ENCODE measurements at regions of chr1 and their contacts with region 1.

Region 1: GRCh38 chr1:54944610-54945544 is 35.6 kb upstream of the TMEM61 start:
- DNase-seq: peak; percentile 63
- H3K4me3 ChIP-seq: no peak overlapping the region
- H3K27ac ChIP-seq: no peak overlapping the region
- H3K27me3 ChIP-seq: no peaks in the 10 kb centered on the region
- CTCF ChIP-seq: peak; percentile 87

Region 2: DNA sequence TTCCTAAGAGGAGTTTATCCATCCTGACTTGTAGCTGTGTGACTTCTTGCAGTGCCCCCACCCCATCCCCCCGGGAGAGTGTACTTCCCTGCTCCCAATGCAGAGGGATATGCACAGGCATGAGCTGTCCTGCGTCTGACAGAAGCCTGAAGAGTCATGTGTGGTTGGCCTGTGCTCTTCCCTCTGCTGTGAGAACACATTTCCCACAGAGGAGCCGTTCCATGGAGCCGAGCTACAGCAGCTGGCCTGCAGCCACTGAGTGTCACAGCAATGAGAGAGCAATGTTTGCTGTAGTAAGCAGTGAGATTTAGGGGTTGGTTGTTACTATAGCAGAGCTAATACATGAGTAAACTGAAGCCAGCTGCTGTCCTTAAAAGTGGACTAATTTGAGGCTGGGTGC is 202.6 kb before region 1 on chr1:
- CTCF ChIA-PET with region 1: no interaction called
- POLR2A ChIA-PET with region 1: no interaction called
- DNase-seq: no peak
- H3K4me3 ChIP-seq: no peak overlapping the region
- H3K27ac ChIP-seq: peak overlapping the region; percentile 21
- H3K27me3 ChIP-seq: no peaks in the 10 kb centered on the region
- CTCF ChIP-seq: no peak

Region 3: DNA sequence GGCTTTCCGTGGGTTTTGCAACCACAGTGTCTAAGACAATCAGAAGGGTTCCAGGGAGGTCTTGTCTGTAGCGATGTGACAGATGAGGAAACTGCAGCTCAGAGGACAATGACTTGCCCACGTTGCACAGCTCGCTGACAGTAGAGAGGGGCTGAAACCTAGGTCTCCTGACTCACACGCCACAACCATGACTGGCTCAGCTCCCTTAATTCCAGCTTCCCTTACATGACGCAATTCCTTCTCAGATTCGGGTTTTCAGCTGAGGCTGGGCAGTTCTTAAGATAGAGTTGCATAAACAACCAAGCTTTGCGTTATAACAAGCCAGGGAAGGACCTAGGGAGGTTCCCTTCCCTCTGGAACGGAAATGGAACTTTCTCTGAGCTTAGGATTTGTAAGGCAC is 94.1 kb before region 1 on chr1:
- CTCF ChIA-PET with region 1: interaction called, 13 read pairs
- POLR2A ChIA-PET with region 1: no interaction called
- DNase-seq: peak; percentile 94
- H3K4me3 ChIP-seq: no peak overlapping the region
- H3K27ac ChIP-seq: peak overlapping the region; percentile 95
- H3K27me3 ChIP-seq: no peaks in the 10 kb centered on the region
- CTCF ChIP-seq: no peak

Region 4: GRCh38 chr1:54886724-54887664 is 57.9 kb before region 1 on chr1 and contains the start of gene DHCR24:
- CTCF ChIA-PET with region 1: interaction called, 16 read pairs
- POLR2A ChIA-PET with region 1: interaction called, 15 read pairs
- DNase-seq: no peak
- H3K4me3 ChIP-seq: peak within 1 kb of the TSS; percentile 90
- H3K27ac ChIP-seq: no peak within 1 kb of the TSS
- H3K27me3 ChIP-seq: peaks cover 4% of the 10 kb centered on the region
- CTCF ChIP-seq: no peak
- polyA plus RNA-seq, gene DHCR24: 60.5 and 89.0 TPM in 2 replicates

Region 5: DNA sequence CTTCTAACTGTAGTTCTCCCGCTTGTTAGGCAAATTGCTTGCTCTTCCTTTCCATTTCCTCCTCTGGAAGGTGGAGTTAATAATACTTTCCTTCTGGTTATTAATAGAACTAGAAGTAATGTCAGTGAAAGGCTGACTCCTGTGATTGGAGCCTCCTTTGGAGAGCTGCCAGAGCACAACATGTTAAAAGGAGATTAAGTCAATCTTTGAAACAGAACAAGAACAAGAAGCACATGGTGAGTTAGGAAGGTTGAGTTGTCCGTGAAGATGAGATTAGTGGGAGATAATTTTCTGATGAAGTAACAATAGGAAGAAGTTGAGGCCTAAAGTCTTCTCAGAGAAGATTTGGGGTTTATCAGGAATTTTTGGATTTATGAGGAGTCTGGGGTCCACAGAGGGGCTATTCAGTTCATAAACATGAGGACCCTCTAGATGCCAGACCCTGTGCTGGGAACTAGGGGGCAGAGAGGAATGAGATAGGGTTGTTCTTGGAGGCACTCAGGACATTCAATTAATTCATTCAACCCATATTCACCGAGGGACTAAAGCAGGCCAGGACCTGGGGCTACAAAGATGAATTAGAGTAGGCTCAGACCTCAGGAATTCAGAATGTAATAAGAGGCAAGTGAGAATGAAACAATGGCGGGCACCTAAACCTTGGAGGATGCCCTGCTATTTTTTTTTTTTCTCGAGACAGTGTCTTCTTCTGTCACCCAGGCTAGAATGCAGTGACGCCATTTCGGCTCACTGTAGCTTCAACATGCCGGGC is 17.2 kb before region 1 on chr1:
- CTCF ChIA-PET with region 1: interaction called, 47 read pairs
- POLR2A ChIA-PET with region 1: no interaction called
- DNase-seq: no peak
- H3K4me3 ChIP-seq: no peak overlapping the region
- H3K27ac ChIP-seq: no peak overlapping the region
- H3K27me3 ChIP-seq: peaks cover 3% of the 10 kb centered on the region
- CTCF ChIP-seq: no peak

Region 6: GRCh38 chr1:54956726-54957125 is 11.8 kb after region 1 on chr1:
- CTCF ChIA-PET with region 1: interaction called, 19 read pairs
- POLR2A ChIA-PET with region 1: interaction called, 3 read pairs
- DNase-seq: no peak
- H3K4me3 ChIP-seq: no peak overlapping the region
- H3K27ac ChIP-seq: no peak overlapping the region
- H3K27me3 ChIP-seq: no peaks in the 10 kb centered on the region
- CTCF ChIP-seq: no peak

Region 7: DNA sequence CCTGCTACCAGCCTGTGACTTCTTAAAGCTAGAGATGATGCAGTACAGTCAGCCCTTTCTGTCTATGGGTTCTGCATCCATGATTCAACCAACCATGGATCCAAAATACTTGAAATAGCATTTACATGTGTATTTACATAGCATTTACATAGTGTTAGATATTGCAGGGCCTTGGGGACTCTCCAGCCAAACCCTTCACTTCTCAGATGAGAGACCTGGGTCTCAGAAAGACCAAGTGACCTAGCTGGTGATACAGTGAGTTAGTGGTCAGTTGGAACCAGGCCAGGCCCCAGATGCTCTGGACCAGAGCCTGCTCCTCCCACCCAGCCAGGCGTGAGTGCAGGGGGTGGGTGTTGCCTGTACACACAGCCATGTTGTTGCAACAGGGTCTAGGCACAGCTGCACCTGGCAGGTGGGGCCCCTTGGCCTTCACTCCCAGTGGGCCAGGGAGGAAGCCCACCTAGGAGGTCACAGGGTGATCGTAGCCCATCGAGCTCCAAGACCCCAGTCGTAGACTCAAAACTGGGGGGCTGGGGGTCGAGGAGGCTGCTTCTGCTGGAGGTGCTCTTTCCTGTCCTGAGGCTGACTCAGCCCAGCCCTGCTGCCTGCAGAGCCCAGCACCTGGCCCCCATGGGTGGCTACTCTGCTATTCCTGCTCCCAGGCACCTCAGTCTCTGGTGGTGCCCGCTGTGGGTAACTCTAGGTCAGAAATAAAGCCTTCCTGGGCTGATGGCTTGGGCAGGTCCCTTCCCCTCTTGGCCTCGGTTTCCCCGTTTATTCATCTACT is 43.2 kb after region 1 on chr1:
- CTCF ChIA-PET with region 1: interaction called, 35 read pairs
- POLR2A ChIA-PET with region 1: no interaction called
- DNase-seq: peak; percentile 42
- H3K4me3 ChIP-seq: no peak overlapping the region
- H3K27ac ChIP-seq: no peak overlapping the region
- H3K27me3 ChIP-seq: peaks cover 29% of the 10 kb centered on the region
- CTCF ChIP-seq: no peak

Region 8: DNA sequence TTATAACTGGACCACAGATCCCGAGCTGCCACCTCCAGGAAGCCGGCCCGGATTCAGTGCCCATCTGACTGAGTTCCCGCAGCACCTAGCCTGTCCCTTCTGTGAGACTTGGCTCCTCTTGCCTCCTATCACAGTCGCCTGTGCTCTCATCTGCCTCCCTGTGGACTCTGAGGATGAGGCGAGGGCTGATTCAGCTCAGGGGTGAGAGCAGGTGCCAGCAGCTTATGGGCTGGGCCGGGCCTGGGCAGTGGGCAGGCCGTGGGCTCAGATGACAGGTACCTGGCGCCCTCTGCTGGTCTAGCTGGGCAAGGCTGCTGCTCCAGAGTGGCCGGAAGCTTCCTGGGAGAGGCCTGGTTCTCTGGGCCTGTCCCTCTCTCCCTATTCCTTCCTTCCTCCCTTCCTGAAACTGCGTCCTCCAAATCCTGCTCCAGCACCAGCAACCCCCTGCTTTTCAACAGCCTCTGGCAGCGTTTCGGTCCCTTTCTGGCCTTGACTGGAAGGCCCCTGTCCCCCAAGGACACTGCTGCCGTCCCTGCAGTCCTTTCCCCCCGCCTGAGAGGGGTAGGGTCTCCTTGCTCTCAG is 77.2 kb after region 1 on chr1:
- CTCF ChIA-PET with region 1: interaction called, 360 read pairs
- POLR2A ChIA-PET with region 1: interaction called, 11 read pairs
- DNase-seq: peak; percentile 74
- H3K4me3 ChIP-seq: no peak overlapping the region
- H3K27ac ChIP-seq: no peak overlapping the region
- H3K27me3 ChIP-seq: peaks cover 30% of the 10 kb centered on the region
- CTCF ChIP-seq: peak; percentile 94